Colonic mucosa (tissue), 4 donors: ENCODE measurements at regions of chr3 and their contacts with region 1.

Region 1: GRCh38 chr3:58188173-58188564 is 22.6 kb downstream of the DNASE1L3 start:
- DNase-seq: no peak
- H3K4me3 ChIP-seq: no peak overlapping the region
- H3K27ac ChIP-seq: no peak overlapping the region
- H3K4me1 ChIP-seq: no peaks in the 10 kb centered on the region
- H3K27me3 ChIP-seq: no peaks in the 10 kb centered on the region
- CTCF ChIP-seq: no peak

Region 2: DNA sequence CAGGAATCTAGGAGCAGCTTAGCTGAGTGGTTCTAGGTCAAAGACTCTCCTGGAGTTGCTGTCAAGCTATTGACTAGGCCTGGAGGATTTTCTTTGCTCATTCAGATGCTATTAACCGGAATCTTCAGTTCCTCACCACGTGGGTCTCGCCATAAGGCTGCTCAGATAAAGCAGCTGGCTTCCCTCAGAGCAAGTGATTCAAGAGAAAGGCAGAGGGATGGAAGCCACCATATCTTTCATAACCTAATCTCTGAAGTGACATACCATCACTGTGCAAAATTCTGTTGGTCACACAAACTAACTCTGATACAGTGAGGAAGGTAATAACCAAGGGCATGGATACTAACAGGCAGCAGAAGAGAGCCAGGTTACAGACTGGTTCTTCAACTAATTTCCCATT is 252.6 kb before region 1 on chr3:
- intact Hi-C with region 1: no loop called
- DNase-seq: no peak
- H3K4me3 ChIP-seq: no peak overlapping the region
- H3K27ac ChIP-seq: no peak overlapping the region
- H3K4me1 ChIP-seq: no peaks in the 10 kb centered on the region
- H3K27me3 ChIP-seq: no peaks in the 10 kb centered on the region
- CTCF ChIP-seq: no peak

Region 3: DNA sequence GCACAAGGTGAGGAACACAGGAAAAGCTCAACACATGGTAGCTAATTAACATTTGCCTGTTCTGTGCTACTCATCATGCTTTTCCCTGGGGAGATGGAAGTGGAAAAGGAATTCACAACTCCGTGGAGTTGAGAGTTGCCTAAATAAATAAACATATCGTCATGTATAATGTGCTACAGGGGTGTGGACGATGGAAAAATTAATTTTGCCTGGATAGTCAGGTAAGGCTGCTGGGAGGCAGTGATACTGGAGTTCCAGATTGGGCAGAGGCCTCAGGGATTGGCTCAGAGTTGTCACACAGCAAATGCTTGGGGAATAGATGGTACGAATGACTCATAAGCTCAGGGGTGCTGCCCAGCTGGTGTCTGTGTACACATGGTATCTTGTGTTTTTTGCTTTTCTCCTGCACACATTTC is 46.4 kb after region 1 on chr3:
- intact Hi-C with region 1: loop called (anchors 5 kb)
- DNase-seq: no peak
- H3K4me3 ChIP-seq: no peak overlapping the region
- H3K27ac ChIP-seq: no peak overlapping the region
- H3K4me1 ChIP-seq: peaks cover 4% of the 10 kb centered on the region
- H3K27me3 ChIP-seq: no peaks in the 10 kb centered on the region
- CTCF ChIP-seq: no peak

Region 4: DNA sequence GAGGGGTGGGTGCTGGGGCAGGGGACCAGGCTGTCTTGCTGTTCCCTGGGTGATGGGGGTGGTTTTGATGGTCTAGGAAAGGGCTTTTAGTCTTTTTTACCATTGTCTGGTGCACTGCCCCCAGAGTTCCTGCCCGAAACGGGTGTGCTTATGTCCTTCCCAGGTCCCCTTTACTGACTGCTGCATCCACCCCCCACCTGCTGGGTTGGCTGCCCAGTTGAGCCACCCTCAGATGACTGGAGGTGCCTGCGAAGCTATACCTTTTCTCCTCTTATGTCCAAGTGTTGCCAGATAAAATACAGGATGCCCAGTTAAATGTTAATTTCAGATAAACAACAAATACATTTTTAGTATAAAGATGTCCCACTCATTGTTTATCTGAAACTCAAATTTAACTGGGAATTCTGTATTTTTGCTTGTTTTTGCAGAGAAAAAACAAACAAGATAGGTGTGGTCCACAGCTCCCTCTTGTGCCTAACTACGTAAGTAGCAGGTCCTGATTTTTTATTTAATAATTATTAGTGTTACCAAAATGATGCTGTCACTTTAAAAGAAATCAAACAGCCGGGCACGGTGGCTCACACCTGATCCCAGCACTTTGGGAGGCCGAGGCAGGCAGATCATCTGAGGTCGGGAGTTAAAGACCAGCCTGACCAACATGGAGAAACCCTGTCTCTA is 111.8 kb after region 1 on chr3:
- intact Hi-C with region 1: loop called (anchors 2 kb)
- DNase-seq: no peak
- H3K4me3 ChIP-seq: no peak overlapping the region
- H3K27ac ChIP-seq: no peak overlapping the region
- H3K4me1 ChIP-seq: no peaks in the 10 kb centered on the region
- H3K27me3 ChIP-seq: no peaks in the 10 kb centered on the region
- CTCF ChIP-seq: peak; percentile 48

Region 5: DNA sequence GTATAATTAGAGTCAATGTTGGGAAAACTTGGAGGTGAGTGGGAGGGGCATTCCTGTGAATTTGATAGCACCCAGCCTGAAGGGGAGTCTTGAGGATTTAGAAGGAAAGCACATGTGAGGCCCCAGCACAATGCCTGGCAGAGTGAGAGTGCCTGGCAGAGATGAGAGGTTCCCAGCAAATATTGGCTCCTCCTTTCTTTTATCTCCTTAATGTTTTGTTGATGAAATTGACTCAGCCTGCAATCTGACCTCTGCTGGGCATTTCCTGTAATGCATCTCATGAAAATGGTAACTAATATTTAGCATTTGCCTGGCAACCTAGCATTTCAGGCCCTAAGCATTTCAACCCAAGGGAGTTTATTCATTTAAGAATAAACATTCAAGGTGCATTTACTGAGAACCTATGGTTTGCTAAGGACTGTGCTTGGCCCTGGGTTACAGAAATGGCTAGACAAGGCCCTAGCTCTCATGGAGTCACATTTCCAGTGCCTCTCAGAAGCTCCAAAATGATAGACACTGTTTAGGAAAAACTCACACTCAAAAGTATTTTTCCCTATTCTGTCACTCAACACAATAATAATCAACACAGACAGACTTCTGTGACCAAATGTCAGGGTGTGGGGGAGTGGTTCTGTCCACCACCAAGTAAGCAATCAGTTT is 226.5 kb after region 1 on chr3:
- intact Hi-C with region 1: loop called (anchors 10 kb)
- DNase-seq: peak; percentile 66
- H3K4me3 ChIP-seq: no peak overlapping the region
- H3K27ac ChIP-seq: no peak overlapping the region
- H3K4me1 ChIP-seq: no peaks in the 10 kb centered on the region
- H3K27me3 ChIP-seq: no peaks in the 10 kb centered on the region
- CTCF ChIP-seq: peak; percentile 68